ENCODE measurements at regions of chr21 and their contacts with region 1.

Region 1: DNA sequence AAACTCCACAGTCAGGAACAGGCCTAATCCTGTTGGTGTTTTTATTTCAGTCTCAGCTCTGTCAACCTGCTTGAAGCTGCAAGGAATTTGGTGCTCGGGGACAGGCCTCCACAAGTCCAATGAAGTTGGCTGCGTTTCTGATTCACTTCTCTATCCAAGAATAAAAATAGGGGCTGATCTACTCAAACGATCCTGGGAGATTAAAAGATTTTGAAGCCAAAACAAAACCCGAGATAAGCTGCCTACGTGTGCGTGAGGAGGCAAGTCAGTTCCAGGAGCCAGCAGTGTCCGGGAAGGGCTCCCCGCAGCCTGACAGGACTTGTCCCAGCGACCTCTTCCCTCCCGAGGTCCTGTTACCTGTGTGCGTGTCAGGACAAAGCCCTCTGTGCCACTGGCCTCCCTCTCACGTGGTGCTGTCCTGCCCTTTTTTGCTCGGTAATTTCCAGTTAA is 98.0 kb downstream of the ETS2 start:
- DNase-seq: peak; percentile 98
- H3K4me3 Mint-ChIP-seq: peak overlapping the region; percentile 28
- H3K27ac Mint-ChIP-seq: peak overlapping the region; percentile 99
- H3K4me1 Mint-ChIP-seq: peaks cover 59% of the 10 kb centered on the region
- H3K27me3 Mint-ChIP-seq: no peaks in the 10 kb centered on the region
- CTCF ChIP-seq: no peak

Region 2: DNA sequence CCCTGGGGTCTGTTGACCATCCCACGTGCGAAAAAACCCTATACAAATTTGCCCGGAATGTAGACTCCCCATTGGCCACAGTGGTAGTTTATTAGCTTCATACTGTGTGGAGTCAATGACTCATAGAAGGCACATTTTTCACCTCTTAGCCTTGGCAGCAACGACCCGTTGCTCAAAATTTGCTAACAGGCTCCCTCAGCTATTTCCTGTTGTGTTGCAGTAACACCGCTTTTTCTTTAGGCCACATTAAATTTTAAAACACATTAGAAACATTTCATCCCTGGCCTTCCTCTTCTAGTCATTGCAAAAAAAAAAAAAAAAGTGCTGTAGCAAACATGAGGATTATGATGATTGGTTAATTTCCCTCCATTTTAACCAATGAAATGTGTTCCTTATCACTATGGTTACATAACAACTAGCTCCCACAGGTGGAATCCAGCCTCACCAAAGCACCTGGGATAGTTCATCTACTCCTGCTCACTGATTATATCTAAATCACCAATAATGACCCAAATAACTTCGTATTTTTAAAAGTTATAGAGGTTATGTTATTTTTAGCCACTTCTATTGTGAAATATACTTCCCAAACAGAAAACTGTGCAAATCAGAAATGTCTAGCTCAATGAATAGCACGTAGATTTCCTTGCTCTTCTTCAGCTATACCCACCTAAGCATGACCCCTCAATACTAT is 147.9 kb before region 1 on chr21:
- CTCF ChIA-PET with region 1: interaction called, 3 read pairs
- POLR2A ChIA-PET with region 1: interaction called, 13 read pairs
- intact Hi-C with region 1: no loop called
- DNase-seq: peak; percentile 90
- H3K4me3 Mint-ChIP-seq: peak overlapping the region; percentile 26
- H3K27ac Mint-ChIP-seq: peak overlapping the region; percentile 96
- H3K4me1 Mint-ChIP-seq: peaks cover 31% of the 10 kb centered on the region
- H3K27me3 Mint-ChIP-seq: no peaks in the 10 kb centered on the region
- CTCF ChIP-seq: no peak

Region 3: GRCh38 chr21:38831526-38832467 is 71.9 kb before region 1 on chr21:
- CTCF ChIA-PET with region 1: interaction called, 3 read pairs
- POLR2A ChIA-PET with region 1: interaction called, 103 read pairs
- intact Hi-C with region 1: loop called (anchors 1 kb)
- DNase-seq: peak; percentile 99
- H3K4me3 Mint-ChIP-seq: peak overlapping the region; percentile 7
- H3K27ac Mint-ChIP-seq: peak overlapping the region; percentile 90
- H3K4me1 Mint-ChIP-seq: peaks cover 24% of the 10 kb centered on the region
- H3K27me3 Mint-ChIP-seq: no peaks in the 10 kb centered on the region
- CTCF ChIP-seq: no peak

Region 4: GRCh38 chr21:38853421-38853919 is 50.2 kb before region 1 on chr21:
- CTCF ChIA-PET with region 1: interaction called, 3 read pairs
- POLR2A ChIA-PET with region 1: interaction called, 37 read pairs
- intact Hi-C with region 1: no loop called
- DNase-seq: peak; percentile 99
- H3K4me3 Mint-ChIP-seq: no peak overlapping the region
- H3K27ac Mint-ChIP-seq: peak overlapping the region; percentile 40
- H3K4me1 Mint-ChIP-seq: peaks cover 34% of the 10 kb centered on the region
- H3K27me3 Mint-ChIP-seq: no peaks in the 10 kb centered on the region
- CTCF ChIP-seq: no peak

Region 5: DNA sequence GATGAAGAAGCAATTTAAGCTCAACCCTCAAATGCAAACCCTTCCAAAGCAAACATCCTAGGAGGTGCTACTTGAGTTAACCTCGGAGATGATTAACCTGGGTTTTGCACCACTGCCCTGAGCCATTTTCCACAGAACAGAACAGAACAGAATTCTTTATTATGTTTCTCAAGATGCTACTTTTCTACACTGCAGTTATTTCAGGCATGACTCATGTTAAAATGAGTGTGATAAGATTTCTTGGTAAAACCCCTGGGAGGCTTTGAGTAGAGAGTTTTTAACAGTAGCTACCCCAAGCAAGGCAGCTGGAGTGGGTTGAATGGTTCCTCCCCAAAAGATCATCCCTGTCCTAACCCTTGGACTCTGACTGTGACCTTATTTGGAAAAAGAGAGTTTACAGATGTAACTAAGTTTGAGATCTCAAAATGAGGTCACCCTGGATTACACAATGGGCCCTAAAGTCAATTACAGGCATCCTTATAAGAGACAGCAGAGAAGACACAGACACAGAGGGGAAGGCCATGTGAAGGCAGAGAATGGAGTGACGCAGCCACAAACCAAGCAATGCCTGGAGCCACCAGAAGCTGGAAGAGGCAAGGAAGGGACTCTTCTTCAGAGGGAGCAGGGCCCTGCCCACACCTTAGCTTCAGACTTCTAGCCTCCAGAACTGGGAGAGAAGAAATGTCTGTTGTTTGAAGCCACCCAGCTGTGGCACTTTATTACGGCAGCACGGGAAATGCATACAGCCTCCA is 55.4 kb after region 1 on chr21:
- CTCF ChIA-PET with region 1: interaction called, 3 read pairs
- POLR2A ChIA-PET with region 1: interaction called, 40 read pairs
- intact Hi-C with region 1: no loop called
- DNase-seq: peak; percentile 49
- H3K4me3 Mint-ChIP-seq: no peak overlapping the region
- H3K27ac Mint-ChIP-seq: peak overlapping the region; percentile 86
- H3K4me1 Mint-ChIP-seq: peaks cover 31% of the 10 kb centered on the region
- H3K27me3 Mint-ChIP-seq: no peaks in the 10 kb centered on the region
- CTCF ChIP-seq: no peak

Region 6: DNA sequence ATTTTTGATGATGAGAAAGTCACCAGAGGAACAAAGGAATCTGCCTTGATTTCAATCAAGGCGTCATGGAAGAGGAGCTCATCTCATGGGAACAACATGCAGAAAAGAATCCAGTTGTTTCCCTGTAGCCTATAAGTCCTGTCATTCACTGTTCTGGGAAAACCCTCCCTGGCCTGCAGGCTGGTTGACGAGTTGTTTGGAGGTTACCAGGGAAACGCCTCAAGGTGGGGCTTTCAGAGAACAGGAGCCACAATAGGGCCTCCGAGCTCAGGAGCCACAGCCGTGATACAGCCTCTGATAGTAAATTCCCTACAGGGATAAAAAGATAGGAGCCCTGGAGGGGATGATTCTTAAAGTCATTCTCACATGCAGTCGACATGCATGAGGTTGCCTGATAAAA is 144.3 kb after region 1 on chr21:
- CTCF ChIA-PET with region 1: no interaction called
- POLR2A ChIA-PET with region 1: interaction called, 15 read pairs
- intact Hi-C with region 1: no loop called
- DNase-seq: peak; percentile 94
- H3K4me3 Mint-ChIP-seq: peak overlapping the region; percentile 44
- H3K27ac Mint-ChIP-seq: peak overlapping the region; percentile 99
- H3K4me1 Mint-ChIP-seq: peaks cover 38% of the 10 kb centered on the region
- H3K27me3 Mint-ChIP-seq: no peaks in the 10 kb centered on the region
- CTCF ChIP-seq: no peak